Activated CD4-positive, alpha-beta T cell treated with anti-CD3 and anti-CD28 coated beads for 36 hours (primary cell): ENCODE measurements at regions of chr14 and their contacts with region 1.

Region 1: GRCh38 chr14:90758028-90758889 is 58.0 kb downstream of the TTC7B start:
- DNase-seq: peak; percentile 97
- ATAC-seq: peak; percentile 93
- H3K4me3 Mint-ChIP-seq: peak overlapping the region; percentile 74
- H3K27ac Mint-ChIP-seq: peak overlapping the region; percentile 79
- H3K4me1 Mint-ChIP-seq: peaks cover 32% of the 10 kb centered on the region
- H3K27me3 Mint-ChIP-seq: peaks cover 2% of the 10 kb centered on the region

Region 2: GRCh38 chr14:90331497-90332435 is 426.5 kb before region 1 on chr14 and contains the start of gene NRDE2:
- CTCF ChIA-PET with region 1: no interaction called
- POLR2A ChIA-PET with region 1: no interaction called
- intact Hi-C with region 1: loop called in 1 of 2 experiments (anchors 1 kb)
- DNase-seq: peak; percentile 99
- ATAC-seq: peak; percentile 99
- H3K4me3 Mint-ChIP-seq: peak within 1 kb of the TSS; percentile 89
- H3K27ac Mint-ChIP-seq: peak within 1 kb of the TSS; percentile 93
- H3K4me1 Mint-ChIP-seq: peaks cover 23% of the 10 kb centered on the region
- H3K27me3 Mint-ChIP-seq: peaks cover 2% of the 10 kb centered on the region
- total RNA-seq, gene NRDE2: 22.8 to 25.3 TPM

Region 3: GRCh38 chr14:90500651-90501370 is 257.4 kb before region 1 on chr14:
- CTCF ChIA-PET with region 1: no interaction called
- POLR2A ChIA-PET with region 1: no interaction called
- intact Hi-C with region 1: no loop called
- DNase-seq: no peak
- ATAC-seq: no peak
- H3K4me3 Mint-ChIP-seq: no peak overlapping the region
- H3K27ac Mint-ChIP-seq: no peak overlapping the region
- H3K4me1 Mint-ChIP-seq: peaks cover 4% of the 10 kb centered on the region
- H3K27me3 Mint-ChIP-seq: peaks cover 15% of the 10 kb centered on the region

Region 4: DNA sequence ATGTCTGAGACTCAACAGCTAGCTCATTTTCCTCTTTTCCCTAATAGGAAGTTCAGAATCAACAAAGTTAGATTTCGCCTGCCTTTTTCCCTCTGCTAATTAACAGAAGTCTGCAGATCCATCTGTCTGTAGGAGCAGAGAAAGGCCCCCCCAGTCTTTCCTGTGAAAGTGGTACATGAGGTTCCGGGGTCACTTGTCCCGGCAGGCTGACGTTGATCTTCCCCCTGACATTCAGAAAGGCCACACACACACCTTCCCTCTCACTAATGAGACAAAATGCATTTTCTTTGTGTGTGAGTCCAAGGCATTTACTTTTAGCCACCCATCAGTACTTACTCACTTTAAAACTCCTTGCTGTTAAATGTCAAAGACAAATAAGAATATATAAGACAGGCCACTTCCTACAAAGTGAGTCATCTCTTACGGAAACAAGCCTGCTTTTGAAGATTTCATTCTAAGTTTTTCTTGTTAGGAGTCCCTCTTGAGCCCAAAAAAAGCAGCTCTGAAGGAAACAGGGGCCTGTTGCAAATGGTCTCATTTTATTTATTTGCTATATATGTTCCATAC is 80.7 kb before region 1 on chr14:
- CTCF ChIA-PET with region 1: no interaction called
- POLR2A ChIA-PET with region 1: no interaction called
- intact Hi-C with region 1: loop called in 1 of 2 experiments (anchors 2 kb)
- DNase-seq: peak; percentile 23
- ATAC-seq: peak; percentile 93
- H3K4me3 Mint-ChIP-seq: peak overlapping the region; percentile 33
- H3K27ac Mint-ChIP-seq: peak overlapping the region; percentile 89
- H3K4me1 Mint-ChIP-seq: peaks cover 38% of the 10 kb centered on the region
- H3K27me3 Mint-ChIP-seq: no peaks in the 10 kb centered on the region

Region 5: DNA sequence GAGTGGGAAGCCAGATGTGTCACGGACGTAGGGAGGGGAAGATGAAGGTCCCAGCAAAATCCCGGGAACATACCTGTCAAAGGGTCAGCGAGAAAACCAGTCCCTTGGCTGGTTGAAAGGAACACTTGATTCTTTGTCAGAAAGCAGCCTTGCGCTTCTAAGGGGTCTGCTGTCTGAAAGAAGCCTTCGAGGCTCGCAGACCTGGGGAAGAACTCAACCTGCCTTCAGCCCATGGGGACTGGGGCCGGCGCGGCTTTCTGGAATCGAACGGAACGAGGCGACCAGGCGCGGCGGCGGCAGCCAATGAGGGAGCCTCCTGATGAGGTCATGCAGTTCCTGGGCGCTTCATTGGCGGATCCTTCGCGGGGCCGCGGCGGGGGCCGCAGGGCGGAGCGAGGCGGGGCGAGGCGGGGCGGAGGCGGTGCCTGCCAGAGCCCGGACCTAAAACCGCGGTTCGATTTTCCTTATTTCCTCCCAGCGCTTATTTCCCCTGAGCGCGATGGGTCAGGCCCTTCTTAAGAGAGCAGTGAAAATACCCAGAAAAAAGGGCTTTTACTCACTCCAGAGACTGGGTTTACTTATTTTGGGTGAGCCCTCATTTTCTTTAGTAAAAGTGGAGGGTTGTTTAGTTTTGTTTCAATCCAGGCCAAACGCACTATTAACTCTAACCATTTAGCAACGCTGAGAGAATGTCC is 69.8 kb after region 1 on chr14:
- CTCF ChIA-PET with region 1: interaction called, 3 read pairs
- POLR2A ChIA-PET with region 1: no interaction called
- intact Hi-C with region 1: loop called (anchors 1 to 2 kb)
- DNase-seq: peak; percentile 95
- ATAC-seq: peak; percentile 99
- H3K4me3 Mint-ChIP-seq: peak overlapping the region; percentile 68
- H3K27ac Mint-ChIP-seq: peak overlapping the region; percentile 88
- H3K4me1 Mint-ChIP-seq: peaks cover 20% of the 10 kb centered on the region
- H3K27me3 Mint-ChIP-seq: no peaks in the 10 kb centered on the region

Region 6: GRCh38 chr14:91038438-91038837 is 280.2 kb after region 1 on chr14:
- CTCF ChIA-PET with region 1: no interaction called
- POLR2A ChIA-PET with region 1: no interaction called
- intact Hi-C with region 1: no loop called
- DNase-seq: peak; percentile 24
- ATAC-seq: peak; percentile 41
- H3K4me3 Mint-ChIP-seq: no peak overlapping the region
- H3K27ac Mint-ChIP-seq: peak overlapping the region; percentile 49
- H3K4me1 Mint-ChIP-seq: peaks cover 64% of the 10 kb centered on the region
- H3K27me3 Mint-ChIP-seq: no peaks in the 10 kb centered on the region

Region 7: DNA sequence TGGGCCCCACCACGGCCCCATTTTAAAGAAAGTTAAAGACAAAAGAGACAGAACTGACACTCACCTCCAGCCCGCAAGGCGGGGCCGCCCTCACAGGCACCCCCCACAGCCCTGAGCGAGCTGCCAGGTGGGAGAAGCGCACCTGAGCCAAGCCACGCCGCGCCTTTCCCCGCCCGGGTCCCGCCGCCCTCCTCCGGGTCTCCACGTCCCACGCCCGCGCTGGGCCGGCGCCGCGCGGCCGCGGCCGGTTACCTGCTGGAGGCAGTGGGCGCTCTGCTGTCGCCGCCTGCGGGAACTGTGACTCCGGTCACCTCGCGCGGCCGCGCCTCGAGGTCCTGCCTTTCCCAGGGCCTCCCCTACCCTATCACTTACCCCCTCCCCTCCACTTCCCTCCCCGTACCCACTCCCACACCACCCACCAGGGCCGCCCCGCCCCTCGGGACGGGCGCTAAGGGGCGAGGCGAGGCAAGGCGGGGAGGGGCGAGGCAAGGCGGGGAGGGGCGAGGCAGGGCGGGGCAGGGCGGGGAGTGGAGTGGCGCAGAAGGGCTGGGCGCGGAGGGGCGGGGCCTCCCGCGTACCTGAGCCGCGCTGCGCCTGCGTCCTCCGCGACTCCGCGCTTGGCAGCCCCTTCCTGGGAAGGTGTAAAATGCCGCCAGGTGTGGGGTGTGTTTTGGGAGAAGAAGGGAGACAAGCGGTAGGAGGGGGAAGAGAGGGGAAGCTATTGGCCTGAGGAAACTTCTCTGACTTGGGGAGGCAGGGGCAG is 1078.0 kb after region 1 on chr14:
- CTCF ChIA-PET with region 1: no interaction called
- POLR2A ChIA-PET with region 1: no interaction called
- intact Hi-C with region 1: loop called in 1 of 2 experiments (anchors 10 kb)
- DNase-seq: peak; percentile 97
- ATAC-seq: peak; percentile 97
- H3K4me3 Mint-ChIP-seq: peak overlapping the region; percentile 83
- H3K27ac Mint-ChIP-seq: peak overlapping the region; percentile 76
- H3K4me1 Mint-ChIP-seq: peaks cover 70% of the 10 kb centered on the region
- H3K27me3 Mint-ChIP-seq: no peaks in the 10 kb centered on the region